Psoas muscle (tissue), 8 donors: ENCODE measurements at regions of chr7 and their contacts with region 1.

Region 1: GRCh38 chr7:111147708-111148533 is 57.0 kb downstream of the LRRN3 start:
- DNase-seq: no peak
- ATAC-seq: no peak
- H3K4me3 ChIP-seq: no peak overlapping the region
- H3K27ac ChIP-seq: no peak overlapping the region
- H3K4me1 ChIP-seq: peaks cover 18% of the 10 kb centered on the region
- H3K27me3 ChIP-seq: no peaks in the 10 kb centered on the region
- CTCF ChIP-seq: no peak

Region 2: GRCh38 chr7:111113263-111114017 is 34.5 kb before region 1 on chr7:
- intact Hi-C with region 1: no loop called
- DNase-seq: no peak
- ATAC-seq: no peak
- H3K4me3 ChIP-seq: no peak overlapping the region
- H3K27ac ChIP-seq: no peak overlapping the region
- H3K4me1 ChIP-seq: peaks cover 6% of the 10 kb centered on the region
- H3K27me3 ChIP-seq: no peaks in the 10 kb centered on the region
- CTCF ChIP-seq: no peak

Region 3: GRCh38 chr7:111486472-111487142 is 338.7 kb after region 1 on chr7:
- intact Hi-C with region 1: loop called in 1 of 2 experiments (anchors 1 kb)
- DNase-seq: no peak
- ATAC-seq: peak in 3 of 4 donors; percentile 54 to 81 (median 66)
- H3K4me3 ChIP-seq: no peak overlapping the region
- H3K27ac ChIP-seq: no peak overlapping the region
- H3K4me1 ChIP-seq: no peaks in the 10 kb centered on the region
- H3K27me3 ChIP-seq: no peaks in the 10 kb centered on the region
- CTCF ChIP-seq: peak; percentile 74